ENCODE measurements at regions of chr1 and their contacts with region 1.

Region 1: DNA sequence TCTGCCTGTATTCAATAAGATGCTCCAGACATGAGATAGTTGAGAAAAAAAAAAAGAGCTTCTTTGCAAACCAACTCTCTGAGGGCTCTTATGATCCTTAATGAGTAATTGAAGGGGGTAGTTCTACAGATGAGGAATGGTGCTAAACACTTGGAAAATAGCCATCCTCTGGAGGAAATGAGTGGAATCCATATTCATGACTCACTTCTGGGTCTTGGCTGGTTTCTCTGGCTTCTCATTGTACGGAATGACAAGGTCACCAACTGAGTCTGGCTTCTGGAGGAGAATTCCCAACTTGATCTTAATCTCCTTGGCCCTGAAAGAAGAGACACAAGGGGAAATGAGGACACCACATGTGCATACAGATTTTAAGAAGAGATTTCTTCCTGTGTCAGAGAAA is 34.7 kb downstream of the RGS5 start:
- DNase-seq: peak; percentile 28 to 47
- H3K4me3 ChIP-seq: no peak overlapping the region
- H3K27ac ChIP-seq: no peak overlapping the region
- H3K4me1 ChIP-seq: no peaks in the 10 kb centered on the region
- H3K27me3 ChIP-seq: no peaks in the 10 kb centered on the region
- CTCF ChIP-seq: no peak

Region 2: DNA sequence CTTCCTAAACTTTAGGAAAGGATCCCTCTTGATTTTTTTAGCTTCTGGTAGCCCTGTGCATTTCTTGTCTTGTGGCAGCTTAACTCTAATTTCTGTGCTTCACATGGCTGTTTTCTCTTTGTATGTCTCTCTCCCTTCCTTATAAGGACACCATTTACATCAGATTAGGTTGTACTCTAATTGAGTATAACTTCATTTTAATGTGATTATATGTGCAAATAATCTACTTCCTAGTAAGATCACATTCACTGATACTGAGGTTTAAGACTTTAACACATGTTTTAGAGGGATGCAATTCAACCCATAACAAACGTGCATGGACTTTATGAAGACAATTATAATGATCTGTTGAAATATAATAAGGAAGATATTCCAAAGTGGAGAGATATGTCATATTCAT is 52.2 kb before region 1 on chr1:
- CTCF ChIA-PET with region 1: no interaction called
- POLR2A ChIA-PET with region 1: no interaction called
- intact Hi-C with region 1: loop called (anchors 5 kb)
- DNase-seq: no peak
- H3K4me3 ChIP-seq: no peak overlapping the region
- H3K27ac ChIP-seq: no peak overlapping the region
- H3K4me1 ChIP-seq: no peaks in the 10 kb centered on the region
- H3K27me3 ChIP-seq: no peaks in the 10 kb centered on the region
- CTCF ChIP-seq: no peak

Region 3: DNA sequence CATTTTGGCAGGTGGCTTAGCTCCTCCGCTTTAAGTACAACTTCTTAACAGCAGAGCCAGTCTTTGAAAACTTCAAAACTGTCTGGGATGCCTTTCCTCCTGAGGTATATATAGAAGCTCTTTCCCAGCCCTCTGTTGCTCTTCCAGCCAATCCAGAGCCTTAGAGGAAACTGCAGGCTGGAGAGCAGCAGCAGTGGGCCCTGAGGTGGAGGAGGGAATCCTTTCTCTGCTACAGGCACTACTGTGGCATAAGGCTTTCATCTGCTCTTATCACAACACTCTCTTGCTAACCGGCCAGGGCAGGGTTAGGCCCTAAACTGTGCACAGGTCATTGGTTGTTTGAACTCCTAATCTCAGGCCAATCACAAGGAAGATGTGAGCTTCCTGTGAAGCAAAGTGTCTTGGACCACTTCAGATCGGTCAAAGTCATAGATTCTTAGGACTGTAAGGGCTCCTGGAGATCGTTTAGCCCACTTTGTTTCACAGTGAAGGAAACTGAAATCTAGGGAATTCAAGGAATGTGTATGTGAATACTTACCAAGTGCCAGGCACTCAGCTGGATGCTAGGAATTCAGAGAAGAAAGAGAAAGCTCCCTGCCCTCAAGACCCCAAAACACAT is 34.9 kb after region 1 on chr1 and contains the start of gene RGS5:
- CTCF ChIA-PET with region 1: no interaction called
- POLR2A ChIA-PET with region 1: no interaction called
- intact Hi-C with region 1: loop called (anchors 1 kb)
- DNase-seq: no peak
- H3K4me3 ChIP-seq: no peak within 1 kb of the TSS
- H3K27ac ChIP-seq: no peak within 1 kb of the TSS
- H3K4me1 ChIP-seq: no peaks in the 10 kb centered on the region
- H3K27me3 ChIP-seq: no peaks in the 10 kb centered on the region
- CTCF ChIP-seq: no peak
- total RNA-seq, gene RGS5: 3.6 and 6.6 TPM in 2 replicates

Region 4: DNA sequence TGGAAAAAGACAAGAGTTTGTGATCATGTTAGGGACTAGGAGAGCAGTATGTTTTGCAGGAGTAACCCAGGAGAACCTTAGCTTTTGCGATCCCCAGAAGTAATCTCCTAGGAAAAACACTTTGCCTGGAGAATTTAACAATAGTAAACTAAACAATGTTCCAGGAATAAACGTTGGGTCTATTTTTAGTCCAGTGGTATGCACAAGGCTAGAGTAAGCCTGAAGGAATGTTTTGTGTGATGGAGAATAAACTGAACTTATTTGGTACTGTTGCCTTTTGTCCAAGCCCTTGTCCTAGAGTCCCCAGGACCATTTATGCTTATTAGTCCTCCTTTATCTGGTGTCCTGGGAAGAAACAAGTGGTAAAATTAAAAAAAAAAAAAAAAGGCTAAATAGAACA is 63.3 kb after region 1 on chr1:
- CTCF ChIA-PET with region 1: no interaction called
- POLR2A ChIA-PET with region 1: no interaction called
- intact Hi-C with region 1: no loop called
- DNase-seq: no peak
- H3K4me3 ChIP-seq: no peak overlapping the region
- H3K27ac ChIP-seq: no peak overlapping the region
- H3K4me1 ChIP-seq: no peaks in the 10 kb centered on the region
- H3K27me3 ChIP-seq: no peaks in the 10 kb centered on the region
- CTCF ChIP-seq: no peak

Region 5: GRCh38 chr1:163347106-163347505 is 179.1 kb after region 1 on chr1:
- CTCF ChIA-PET with region 1: no interaction called
- POLR2A ChIA-PET with region 1: no interaction called
- intact Hi-C with region 1: no loop called
- DNase-seq: no peak
- H3K4me3 ChIP-seq: no peak overlapping the region
- H3K27ac ChIP-seq: no peak overlapping the region
- H3K4me1 ChIP-seq: no peaks in the 10 kb centered on the region
- H3K27me3 ChIP-seq: no peaks in the 10 kb centered on the region
- CTCF ChIP-seq: no peak

Measured in PC-9 (cell line).